ENCODE measurements at regions of chr17 and their contacts with region 1.

Region 1: GRCh38 chr17:8151123-8151640 is 1.0 kb downstream of the PER1 start:
- DNase-seq: peak; percentile 69
- H3K4me3 Mint-ChIP-seq: no peak overlapping the region
- H3K27ac Mint-ChIP-seq: no peak overlapping the region
- H3K4me1 Mint-ChIP-seq: peaks cover 33% of the 10 kb centered on the region
- H3K27me3 Mint-ChIP-seq: no peaks in the 10 kb centered on the region
- CTCF ChIP-seq: no peak

Region 2: GRCh38 chr17:8125157-8125946 is 25.8 kb before region 1 on chr17:
- CTCF ChIA-PET with region 1: interaction called, 6 read pairs
- POLR2A ChIA-PET with region 1: interaction called, 429 read pairs
- intact Hi-C with region 1: loop called (anchors 1 kb)
- DNase-seq: peak; percentile 75
- H3K4me3 Mint-ChIP-seq: peak overlapping the region; percentile 86
- H3K27ac Mint-ChIP-seq: peak overlapping the region; percentile 46
- H3K4me1 Mint-ChIP-seq: peaks cover 44% of the 10 kb centered on the region
- H3K27me3 Mint-ChIP-seq: no peaks in the 10 kb centered on the region
- CTCF ChIP-seq: no peak

Measured in MCF 10A (cell line).